CD4-positive, alpha-beta memory T cell (primary cell): ENCODE measurements at regions of chr16 and their contacts with region 1.

Region 1: DNA sequence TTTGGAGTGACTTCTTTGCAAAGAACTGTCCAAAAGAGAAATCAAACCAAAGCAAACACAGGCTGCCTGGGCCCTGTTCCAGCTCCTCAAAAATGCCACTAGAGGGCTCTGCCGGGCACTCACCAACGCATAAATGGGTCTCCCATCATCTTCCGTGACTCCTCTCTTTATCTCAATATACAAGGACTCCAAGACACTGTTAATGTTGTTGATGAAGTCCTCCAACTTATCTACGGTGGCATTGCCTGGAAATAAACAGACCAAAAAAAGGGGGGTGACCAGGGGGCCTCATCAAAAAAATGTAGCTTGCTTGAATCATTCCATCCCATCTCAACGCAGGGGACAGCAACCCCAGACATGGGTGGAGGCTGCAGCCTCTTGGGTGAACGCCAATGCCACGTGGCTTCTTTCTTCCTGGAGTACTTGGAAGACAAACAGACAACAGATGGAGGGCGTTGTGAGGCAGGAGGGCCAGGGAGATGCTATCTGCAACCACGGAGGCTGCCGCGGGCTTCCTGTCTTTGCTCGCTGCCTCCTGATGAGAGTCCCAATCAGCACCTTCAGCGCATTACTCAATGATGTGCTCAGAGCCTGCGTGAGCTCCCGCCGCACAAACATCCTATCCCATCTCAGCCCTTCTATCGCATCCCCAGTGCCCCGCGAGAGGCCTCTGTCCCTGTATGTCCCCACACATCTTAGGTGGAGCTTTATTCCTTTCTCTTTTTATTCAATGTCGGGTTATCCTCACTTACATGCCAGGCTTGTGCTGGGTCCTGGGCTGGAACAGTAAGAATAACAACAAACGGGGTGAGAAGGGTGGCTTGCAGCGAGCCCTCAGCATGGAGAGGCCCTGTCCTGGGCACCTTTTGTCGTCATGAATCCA is 32.0 kb downstream of the KDM8 start:
- DNase-seq: peak; percentile 95 to 99 (median 96)
- H3K4me3 ChIP-seq: peak overlapping the region; percentile 26 to 45
- H3K4me3 Mint-ChIP-seq: peak overlapping the region; percentile 75 to 92 (median 84)
- H3K27ac ChIP-seq: peak overlapping the region; percentile 90
- H3K27ac Mint-ChIP-seq: peak overlapping the region; percentile 97 to 100 (median 100)
- H3K4me1 ChIP-seq: peaks cover 99% of the 10 kb centered on the region
- H3K4me1 Mint-ChIP-seq: peaks cover 72 to 99% (median 84%) of the 10 kb centered on the region in 4 donors
- H3K27me3 ChIP-seq: no peaks in the 10 kb centered on the region
- H3K27me3 Mint-ChIP-seq: no peaks in the 10 kb centered on the region

Region 2: GRCh38 chr16:26993963-26994362 is 241.3 kb before region 1 on chr16:
- CTCF ChIA-PET with region 1: no interaction called
- POLR2A ChIA-PET with region 1: no interaction called
- intact Hi-C with region 1: no loop called
- DNase-seq: no peak
- H3K4me3 ChIP-seq: no peak overlapping the region
- H3K4me3 Mint-ChIP-seq: no peak overlapping the region
- H3K27ac ChIP-seq: no peak overlapping the region
- H3K27ac Mint-ChIP-seq: no peak overlapping the region
- H3K4me1 ChIP-seq: no peaks in the 10 kb centered on the region
- H3K4me1 Mint-ChIP-seq: no peaks in the 10 kb centered on the region
- H3K27me3 ChIP-seq: no peaks in the 10 kb centered on the region
- H3K27me3 Mint-ChIP-seq: peaks cover 17 to 27% of the 10 kb centered on the region in 2 donors

Region 3: GRCh38 chr16:27040732-27041131 is 194.6 kb before region 1 on chr16:
- CTCF ChIA-PET with region 1: no interaction called
- POLR2A ChIA-PET with region 1: no interaction called
- intact Hi-C with region 1: no loop called
- DNase-seq: no peak
- H3K4me3 ChIP-seq: no peak overlapping the region
- H3K4me3 Mint-ChIP-seq: no peak overlapping the region
- H3K27ac ChIP-seq: no peak overlapping the region
- H3K27ac Mint-ChIP-seq: no peak overlapping the region
- H3K4me1 ChIP-seq: no peaks in the 10 kb centered on the region
- H3K4me1 Mint-ChIP-seq: no peaks in the 10 kb centered on the region
- H3K27me3 ChIP-seq: peaks cover 3% of the 10 kb centered on the region
- H3K27me3 Mint-ChIP-seq: peaks cover 9% of the 10 kb centered on the region in 2 donors

Region 4: DNA sequence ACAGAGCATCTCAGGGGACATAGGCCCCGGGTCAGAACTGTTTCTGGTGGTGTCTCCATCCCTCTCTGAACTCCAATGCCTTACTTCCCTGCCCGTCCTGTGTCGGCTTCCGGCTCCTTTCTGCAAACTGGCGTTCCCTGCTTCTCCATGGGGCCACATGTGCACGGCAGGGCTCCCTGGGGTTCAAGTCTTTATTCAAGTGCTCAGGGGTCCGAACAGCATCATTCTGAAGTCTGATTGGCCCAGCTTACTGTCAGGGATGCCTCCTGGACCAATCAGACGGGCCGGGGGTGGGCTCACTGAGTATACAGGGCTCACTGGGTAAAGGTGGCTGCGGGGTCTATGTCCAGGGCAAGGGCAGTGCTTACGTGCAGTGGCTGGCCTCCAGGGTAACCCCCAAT is 151.4 kb before region 1 on chr16:
- CTCF ChIA-PET with region 1: no interaction called
- POLR2A ChIA-PET with region 1: no interaction called
- intact Hi-C with region 1: no loop called
- DNase-seq: no peak
- H3K4me3 ChIP-seq: no peak overlapping the region
- H3K4me3 Mint-ChIP-seq: no peak overlapping the region
- H3K27ac ChIP-seq: no peak overlapping the region
- H3K27ac Mint-ChIP-seq: no peak overlapping the region
- H3K4me1 ChIP-seq: no peaks in the 10 kb centered on the region
- H3K4me1 Mint-ChIP-seq: peaks cover 0 to 2% (median 0%) of the 10 kb centered on the region in 4 donors
- H3K27me3 ChIP-seq: no peaks in the 10 kb centered on the region
- H3K27me3 Mint-ChIP-seq: peaks cover 16 to 35% of the 10 kb centered on the region in 2 donors

Region 5: DNA sequence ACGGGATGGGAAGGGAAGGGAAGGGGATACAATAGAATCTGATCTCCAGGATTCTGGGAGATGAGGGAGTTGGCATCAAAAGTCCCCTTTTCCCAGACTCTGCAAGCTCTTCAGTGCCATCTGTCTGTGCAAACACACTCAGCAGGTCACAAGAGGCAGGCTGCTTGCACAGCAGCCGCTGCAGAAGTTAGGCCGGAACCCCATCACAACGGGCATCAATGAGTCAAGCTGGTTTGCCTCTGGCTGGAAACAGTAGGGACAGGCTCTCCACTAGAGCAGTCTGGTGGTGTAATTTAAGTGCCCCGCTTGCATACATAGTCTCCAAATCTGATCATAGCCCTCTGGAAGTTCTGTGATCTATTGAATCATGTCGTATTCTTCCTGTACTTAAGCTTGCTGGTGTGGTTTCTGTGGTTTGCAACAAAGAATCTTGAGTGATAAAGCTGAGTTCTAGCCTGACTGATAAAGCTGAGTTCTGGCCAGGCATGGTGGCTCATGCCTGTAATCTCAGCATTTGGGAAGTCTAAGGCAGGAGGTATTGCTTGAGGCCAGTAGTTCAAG is 65.7 kb before region 1 on chr16:
- CTCF ChIA-PET with region 1: interaction called, 32 read pairs
- POLR2A ChIA-PET with region 1: interaction called, 78 read pairs
- intact Hi-C with region 1: loop called (anchors 1 kb)
- DNase-seq: peak; percentile 86 to 93 (median 87)
- H3K4me3 ChIP-seq: no peak overlapping the region
- H3K4me3 Mint-ChIP-seq: peak overlapping the region in 7 of 8 donors; percentile 35 to 77 (median 74)
- H3K27ac ChIP-seq: no peak overlapping the region
- H3K27ac Mint-ChIP-seq: peak overlapping the region; percentile 82 to 98 (median 96)
- H3K4me1 ChIP-seq: peaks cover 67% of the 10 kb centered on the region
- H3K4me1 Mint-ChIP-seq: peaks cover 46 to 74% (median 64%) of the 10 kb centered on the region in 4 donors
- H3K27me3 ChIP-seq: no peaks in the 10 kb centered on the region
- H3K27me3 Mint-ChIP-seq: no peaks in the 10 kb centered on the region

Region 6: DNA sequence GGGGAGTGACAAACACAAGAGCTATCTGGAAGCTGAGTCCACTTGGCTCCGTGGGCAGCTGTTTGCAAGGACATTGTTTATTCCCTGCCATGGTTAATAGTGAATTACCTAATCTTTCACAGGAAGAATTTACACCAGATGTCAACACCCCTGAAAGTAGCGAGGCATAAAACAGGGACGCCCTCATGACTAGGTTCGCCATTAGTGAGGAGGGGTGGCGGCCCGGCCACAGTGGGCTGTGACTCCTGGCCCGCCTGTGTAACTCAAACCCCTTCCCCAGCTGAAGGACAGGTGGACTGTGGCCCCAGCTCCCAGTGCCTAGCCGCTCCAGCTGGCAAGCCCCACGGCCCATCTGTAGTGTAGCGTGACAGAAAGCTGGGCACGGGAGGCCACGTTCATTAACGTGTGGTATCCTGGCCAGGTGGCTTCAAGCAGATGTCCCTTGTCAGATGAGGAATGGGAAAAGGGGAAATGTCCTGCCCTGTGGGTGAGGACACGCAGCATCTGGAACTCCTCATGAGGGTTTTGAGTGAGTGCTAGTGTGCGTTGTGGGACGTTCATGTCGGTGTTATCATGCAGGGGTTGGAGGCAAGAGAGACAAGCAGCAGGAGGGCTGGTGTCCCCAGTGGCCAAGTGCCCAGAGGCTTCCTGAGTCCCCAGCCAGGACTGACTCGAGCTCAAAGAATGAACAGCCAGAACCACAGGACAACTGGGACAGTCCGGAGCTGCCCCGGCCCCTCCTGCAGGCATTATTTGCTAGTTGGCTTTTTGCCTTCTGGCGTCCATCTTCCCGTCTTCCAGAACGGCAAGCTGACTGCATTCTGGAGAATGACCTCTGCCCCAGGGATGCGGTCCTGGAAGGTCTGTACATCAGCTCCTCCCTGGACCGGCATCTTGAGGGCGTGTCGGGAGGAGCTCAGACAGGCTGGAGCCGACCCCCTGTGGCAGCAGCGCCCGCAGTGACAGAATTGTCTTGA is 12.8 kb before region 1 on chr16:
- CTCF ChIA-PET with region 1: interaction called, 17 read pairs
- POLR2A ChIA-PET with region 1: interaction called, 47 read pairs
- intact Hi-C with region 1: no loop called
- DNase-seq: no peak
- H3K4me3 ChIP-seq: no peak overlapping the region
- H3K4me3 Mint-ChIP-seq: no peak overlapping the region
- H3K27ac ChIP-seq: no peak overlapping the region
- H3K27ac Mint-ChIP-seq: peak overlapping the region in 6 of 7 donors; percentile 22 to 75 (median 48)
- H3K4me1 ChIP-seq: no peaks in the 10 kb centered on the region
- H3K4me1 Mint-ChIP-seq: peaks cover 7 to 23% (median 14%) of the 10 kb centered on the region in 4 donors
- H3K27me3 ChIP-seq: no peaks in the 10 kb centered on the region
- H3K27me3 Mint-ChIP-seq: no peaks in the 10 kb centered on the region

Region 7: GRCh38 chr16:27313422-27314160 is 78.3 kb after region 1 on chr16 and contains the start of gene IL4R:
- CTCF ChIA-PET with region 1: interaction called, 61 read pairs
- POLR2A ChIA-PET with region 1: interaction called, 144 read pairs
- intact Hi-C with region 1: loop called (anchors 1 kb)
- DNase-seq: peak; percentile 66 to 77 (median 69)
- H3K4me3 ChIP-seq: peak within 1 kb of the TSS; percentile 76 to 92
- H3K4me3 Mint-ChIP-seq: peak within 1 kb of the TSS; percentile 89 to 98 (median 94)
- H3K27ac ChIP-seq: peak within 1 kb of the TSS; percentile 96
- H3K27ac Mint-ChIP-seq: peak within 1 kb of the TSS; percentile 94 to 99 (median 99)
- H3K4me1 ChIP-seq: peaks cover 47% of the 10 kb centered on the region
- H3K4me1 Mint-ChIP-seq: peaks cover 30 to 53% (median 42%) of the 10 kb centered on the region in 4 donors
- H3K27me3 ChIP-seq: no peaks in the 10 kb centered on the region
- H3K27me3 Mint-ChIP-seq: no peaks in the 10 kb centered on the region
- total RNA-seq, gene IL4R: 143 to 152 TPM

Region 8: DNA sequence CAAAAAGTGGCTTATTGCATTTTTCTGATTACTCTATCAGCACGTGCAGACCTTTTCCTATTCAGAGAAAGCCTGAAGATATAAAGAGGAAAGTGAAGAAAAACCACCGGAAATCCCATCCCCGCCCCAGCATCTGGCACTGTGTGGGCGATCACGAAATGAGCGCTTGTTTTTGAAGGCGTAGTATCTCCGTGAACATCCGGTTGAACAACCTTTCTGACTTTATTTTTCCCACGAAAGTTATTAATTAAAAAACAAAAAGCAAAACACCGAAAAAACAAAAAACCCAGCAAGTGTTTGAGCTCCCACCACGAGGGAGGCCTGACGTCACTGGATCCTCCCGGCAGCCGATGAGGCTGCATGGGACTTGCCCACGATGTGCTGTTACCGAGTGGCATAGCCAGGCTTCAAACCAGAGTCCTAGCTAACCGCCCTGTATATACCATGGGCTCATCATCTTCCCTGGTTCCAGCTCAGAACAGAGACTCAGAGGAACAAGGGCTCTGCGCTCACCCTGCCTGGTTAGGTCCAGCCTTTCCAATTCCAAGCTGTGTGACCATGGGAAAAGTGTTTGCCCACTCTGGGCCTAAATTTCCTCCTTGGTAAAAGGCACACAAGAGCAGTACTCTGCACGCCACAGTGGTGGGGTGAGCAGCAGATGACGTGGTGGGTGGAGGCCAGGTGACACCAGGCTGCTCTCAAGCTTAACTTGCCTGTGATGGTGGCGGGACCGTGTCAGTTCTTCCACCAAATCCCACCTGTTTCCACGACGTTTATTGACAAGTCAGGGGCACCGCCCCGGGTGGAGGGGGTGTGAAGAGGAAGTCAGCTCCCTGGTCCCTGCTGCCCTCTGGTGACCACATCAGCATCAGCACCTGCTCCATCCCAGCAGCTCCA is 132.4 kb after region 1 on chr16:
- CTCF ChIA-PET with region 1: interaction called, 213 read pairs
- POLR2A ChIA-PET with region 1: interaction called, 239 read pairs
- intact Hi-C with region 1: loop called (anchors 1 kb)
- DNase-seq: peak; percentile 91 to 98 (median 93)
- H3K4me3 ChIP-seq: peak overlapping the region in 1 of 2 donors; percentile 36
- H3K4me3 Mint-ChIP-seq: peak overlapping the region in 7 of 8 donors; percentile 37 to 81 (median 70)
- H3K27ac ChIP-seq: peak overlapping the region; percentile 96
- H3K27ac Mint-ChIP-seq: peak overlapping the region; percentile 99 to 100 (median 99)
- H3K4me1 ChIP-seq: peaks cover 65% of the 10 kb centered on the region
- H3K4me1 Mint-ChIP-seq: peaks cover 32 to 65% (median 44%) of the 10 kb centered on the region in 4 donors
- H3K27me3 ChIP-seq: no peaks in the 10 kb centered on the region
- H3K27me3 Mint-ChIP-seq: no peaks in the 10 kb centered on the region

Region 9: DNA sequence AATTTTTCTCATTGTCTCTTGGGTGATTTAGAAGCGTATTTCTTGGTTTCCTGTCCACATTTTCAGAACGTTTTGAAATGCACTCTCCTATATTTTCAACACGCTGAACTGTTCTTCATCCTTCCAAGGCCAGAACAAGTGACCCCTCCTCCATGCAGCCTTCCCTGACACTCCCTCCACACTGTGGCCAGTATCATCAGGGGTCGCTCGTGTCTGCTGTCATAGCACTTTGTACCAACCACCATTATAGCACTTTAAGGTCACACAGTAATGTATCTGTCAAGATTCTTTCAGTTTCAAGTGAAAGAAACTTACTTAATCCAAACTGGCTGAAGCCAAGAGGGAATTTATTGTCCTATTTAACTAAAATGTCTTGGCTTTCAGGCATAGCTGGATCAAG is 149.1 kb after region 1 on chr16:
- CTCF ChIA-PET with region 1: no interaction called
- POLR2A ChIA-PET with region 1: no interaction called
- intact Hi-C with region 1: no loop called
- DNase-seq: no peak
- H3K4me3 ChIP-seq: no peak overlapping the region
- H3K4me3 Mint-ChIP-seq: no peak overlapping the region
- H3K27ac ChIP-seq: no peak overlapping the region
- H3K27ac Mint-ChIP-seq: peak overlapping the region in 1 of 7 donors; percentile 52
- H3K4me1 ChIP-seq: peaks cover under 1% of the 10 kb centered on the region
- H3K4me1 Mint-ChIP-seq: peaks cover 2 to 8% (median 5%) of the 10 kb centered on the region in 4 donors
- H3K27me3 ChIP-seq: no peaks in the 10 kb centered on the region
- H3K27me3 Mint-ChIP-seq: no peaks in the 10 kb centered on the region

Region 10: DNA sequence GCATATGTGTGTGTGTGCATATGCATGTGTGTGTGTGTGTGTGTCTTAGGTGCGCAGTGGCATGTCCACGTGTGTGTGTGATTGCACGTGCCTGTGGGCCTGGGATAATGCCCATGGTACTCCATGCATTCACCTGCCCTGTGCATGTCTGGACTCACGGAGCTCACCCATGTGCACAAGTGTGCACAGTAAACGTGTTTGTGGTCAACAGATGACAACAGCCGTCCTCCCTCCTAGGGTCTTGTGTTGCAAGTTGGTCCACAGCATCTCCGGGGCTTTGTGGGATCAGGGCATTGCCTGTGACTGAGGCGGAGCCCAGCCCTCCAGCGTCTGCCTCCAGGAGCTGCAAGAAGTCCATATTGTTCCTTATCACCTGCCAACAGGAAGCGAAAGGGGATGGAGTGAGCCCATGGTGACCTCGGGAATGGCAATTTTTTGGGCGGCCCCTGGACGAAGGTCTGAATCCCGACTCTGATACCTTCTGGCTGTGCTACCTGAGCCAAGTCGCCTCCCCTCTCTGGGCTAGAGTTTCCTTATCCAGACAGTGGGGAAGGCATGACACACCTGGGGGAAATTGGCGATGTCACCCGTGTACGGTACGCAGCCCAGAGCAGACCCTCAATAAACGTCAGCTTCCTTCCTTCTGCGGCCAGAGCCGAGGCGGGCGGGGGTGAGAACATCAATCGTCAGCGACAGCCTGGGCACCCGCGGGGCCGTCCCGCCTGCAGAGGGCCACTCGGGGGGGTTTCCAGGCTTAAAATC is 214.3 kb after region 1 on chr16:
- CTCF ChIA-PET with region 1: interaction called, 27 read pairs
- POLR2A ChIA-PET with region 1: interaction called, 27 read pairs
- intact Hi-C with region 1: no loop called
- DNase-seq: peak; percentile 72 to 94 (median 80)
- H3K4me3 ChIP-seq: no peak overlapping the region
- H3K4me3 Mint-ChIP-seq: peak overlapping the region in 7 of 8 donors; percentile 50 to 88 (median 68)
- H3K27ac ChIP-seq: peak overlapping the region; percentile 53
- H3K27ac Mint-ChIP-seq: peak overlapping the region; percentile 80 to 99 (median 94)
- H3K4me1 ChIP-seq: peaks cover 74% of the 10 kb centered on the region
- H3K4me1 Mint-ChIP-seq: peaks cover 44 to 89% (median 70%) of the 10 kb centered on the region in 4 donors
- H3K27me3 ChIP-seq: no peaks in the 10 kb centered on the region
- H3K27me3 Mint-ChIP-seq: no peaks in the 10 kb centered on the region